Mammary epithelial cell (primary cell): ENCODE measurements at regions of chr15 and their contacts with region 1.

Region 1: DNA sequence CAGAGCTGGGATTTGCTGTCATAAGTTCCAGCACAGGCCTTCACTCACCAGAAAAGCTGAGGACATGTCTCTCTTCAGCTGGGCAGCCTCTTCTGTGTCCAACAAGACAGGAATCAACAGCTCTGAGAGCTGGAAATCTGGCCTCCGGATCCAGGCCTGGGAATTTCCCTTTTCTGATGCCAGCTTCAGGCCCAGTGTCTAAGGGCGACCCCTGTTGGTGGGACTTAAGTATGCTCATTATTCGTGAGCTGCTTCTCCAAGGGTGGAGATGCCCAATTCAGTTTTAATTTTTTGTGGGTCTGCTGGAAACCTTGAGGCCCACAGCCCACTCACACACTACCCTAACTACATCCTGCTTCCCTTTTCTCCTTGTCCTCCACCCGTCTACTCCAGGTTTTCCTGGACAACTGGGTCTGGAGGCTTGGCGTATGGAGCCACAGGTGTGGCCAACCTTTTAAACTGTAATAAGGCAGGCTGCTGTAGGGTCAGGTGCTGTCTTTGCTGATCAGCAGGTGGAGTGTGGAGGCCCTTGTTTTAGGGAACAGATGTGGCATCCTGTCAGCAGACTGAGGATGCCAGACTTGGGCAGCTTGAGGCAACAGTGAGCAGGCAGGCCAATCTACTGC is 2.6 kb upstream of the CEMIP start:
- DNase-seq: peak; percentile 69
- H3K4me3 ChIP-seq: no peak overlapping the region
- H3K27ac ChIP-seq: peak overlapping the region; percentile 38
- H3K4me1 ChIP-seq: peaks cover 26% of the 10 kb centered on the region
- H3K27me3 ChIP-seq: no peaks in the 10 kb centered on the region
- CTCF ChIP-seq: peak; percentile 86 to 90

Region 2: DNA sequence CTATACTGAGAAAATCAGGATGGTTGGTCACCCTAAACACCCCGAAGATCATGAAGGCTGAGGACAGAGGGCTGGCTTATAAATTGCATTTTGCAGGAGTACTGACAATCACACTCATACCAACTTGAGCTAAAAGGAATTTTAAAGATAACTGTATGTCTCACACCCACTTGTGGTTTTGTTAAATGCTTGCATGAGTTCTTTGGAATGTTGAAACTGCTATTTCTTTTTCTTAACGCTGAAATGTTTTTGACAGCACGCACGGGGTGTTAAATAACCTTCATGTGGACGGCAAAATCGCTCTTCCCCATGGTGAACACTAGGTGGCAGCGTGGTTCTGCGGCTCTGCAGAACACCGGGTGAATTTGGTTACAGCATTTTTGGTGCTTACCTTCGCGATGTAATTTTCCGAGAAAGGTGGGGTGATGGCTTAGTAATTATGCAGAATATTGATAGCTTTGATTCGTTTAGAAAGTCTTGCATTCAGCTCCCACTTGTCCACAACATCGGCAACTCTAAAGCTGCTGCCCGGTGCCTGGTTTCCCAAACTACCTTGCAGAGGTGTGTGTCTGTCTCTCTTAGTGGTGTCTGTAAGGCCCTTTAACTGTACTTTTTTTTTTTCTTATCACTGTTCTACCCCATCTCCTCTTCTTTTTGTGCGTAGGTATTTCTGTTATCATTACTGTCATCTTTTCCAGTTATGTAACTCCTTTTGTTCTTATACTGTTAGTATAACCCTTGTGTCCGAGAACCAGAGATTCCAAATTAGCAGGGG is 320.7 kb before region 1 on chr15:
- CTCF ChIA-PET with region 1: interaction called, 7 read pairs
- dilution Hi-C with region 1: no loop called
- in situ Hi-C with region 1: loop called (anchors 5 kb)
- intact Hi-C with region 1: loop called (anchors 1 kb)
- DNase-seq: peak; percentile 72
- H3K4me3 ChIP-seq: no peak overlapping the region
- H3K27ac ChIP-seq: no peak overlapping the region
- H3K4me1 ChIP-seq: peaks cover 5% of the 10 kb centered on the region
- H3K27me3 ChIP-seq: no peaks in the 10 kb centered on the region
- CTCF ChIP-seq: peak; percentile 95 to 97

Region 3: GRCh38 chr15:80604583-80605575 is 171.7 kb before region 1 on chr15:
- CTCF ChIA-PET with region 1: no interaction called
- dilution Hi-C with region 1: no loop called
- in situ Hi-C with region 1: no loop called
- intact Hi-C with region 1: no loop called
- DNase-seq: no peak
- H3K4me3 ChIP-seq: no peak overlapping the region
- H3K27ac ChIP-seq: no peak overlapping the region
- H3K4me1 ChIP-seq: peaks cover 23% of the 10 kb centered on the region
- H3K27me3 ChIP-seq: no peaks in the 10 kb centered on the region
- CTCF ChIP-seq: no peak

Region 4: DNA sequence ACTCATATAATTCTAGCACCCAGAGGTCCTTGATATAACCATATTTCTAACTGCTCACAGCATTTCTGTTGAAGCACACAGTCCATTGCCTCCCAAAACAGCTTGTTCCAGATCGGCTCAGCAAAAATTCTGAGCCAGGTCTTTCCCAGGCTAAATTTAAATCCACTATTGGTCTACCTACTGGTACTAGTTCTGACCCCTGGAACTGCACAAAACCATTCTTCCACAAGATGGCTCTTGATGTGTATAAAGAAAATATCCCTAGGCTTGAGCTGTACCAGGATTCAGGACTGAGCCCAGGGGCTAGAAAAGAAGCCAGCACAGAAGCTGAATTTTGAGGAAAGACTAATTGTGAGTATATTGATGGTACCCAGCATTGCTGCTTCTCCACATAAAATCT is 156.9 kb before region 1 on chr15:
- CTCF ChIA-PET with region 1: interaction called, 21 read pairs
- dilution Hi-C with region 1: no loop called
- in situ Hi-C with region 1: no loop called
- intact Hi-C with region 1: loop called (anchors 1 kb)
- DNase-seq: peak; percentile 24
- H3K4me3 ChIP-seq: no peak overlapping the region
- H3K27ac ChIP-seq: no peak overlapping the region
- H3K4me1 ChIP-seq: peaks cover 12% of the 10 kb centered on the region
- H3K27me3 ChIP-seq: no peaks in the 10 kb centered on the region
- CTCF ChIP-seq: peak in 1 of 2 donors; percentile 41

Region 5: GRCh38 chr15:80695104-80695910 is 81.2 kb before region 1 on chr15 and contains the start of gene ABHD17C:
- CTCF ChIA-PET with region 1: interaction called, 3 read pairs
- dilution Hi-C with region 1: no loop called
- in situ Hi-C with region 1: no loop called
- intact Hi-C with region 1: loop called (anchors 2 kb)
- DNase-seq: peak; percentile 70
- H3K4me3 ChIP-seq: peak within 1 kb of the TSS; percentile 89 to 95 (median 95)
- H3K27ac ChIP-seq: peak within 1 kb of the TSS; percentile 79
- H3K4me1 ChIP-seq: peaks cover 19% of the 10 kb centered on the region
- H3K27me3 ChIP-seq: no peaks in the 10 kb centered on the region
- CTCF ChIP-seq: no peak
- total RNA-seq, gene ABHD17C: 5.2 to 23.2 TPM

Region 6: DNA sequence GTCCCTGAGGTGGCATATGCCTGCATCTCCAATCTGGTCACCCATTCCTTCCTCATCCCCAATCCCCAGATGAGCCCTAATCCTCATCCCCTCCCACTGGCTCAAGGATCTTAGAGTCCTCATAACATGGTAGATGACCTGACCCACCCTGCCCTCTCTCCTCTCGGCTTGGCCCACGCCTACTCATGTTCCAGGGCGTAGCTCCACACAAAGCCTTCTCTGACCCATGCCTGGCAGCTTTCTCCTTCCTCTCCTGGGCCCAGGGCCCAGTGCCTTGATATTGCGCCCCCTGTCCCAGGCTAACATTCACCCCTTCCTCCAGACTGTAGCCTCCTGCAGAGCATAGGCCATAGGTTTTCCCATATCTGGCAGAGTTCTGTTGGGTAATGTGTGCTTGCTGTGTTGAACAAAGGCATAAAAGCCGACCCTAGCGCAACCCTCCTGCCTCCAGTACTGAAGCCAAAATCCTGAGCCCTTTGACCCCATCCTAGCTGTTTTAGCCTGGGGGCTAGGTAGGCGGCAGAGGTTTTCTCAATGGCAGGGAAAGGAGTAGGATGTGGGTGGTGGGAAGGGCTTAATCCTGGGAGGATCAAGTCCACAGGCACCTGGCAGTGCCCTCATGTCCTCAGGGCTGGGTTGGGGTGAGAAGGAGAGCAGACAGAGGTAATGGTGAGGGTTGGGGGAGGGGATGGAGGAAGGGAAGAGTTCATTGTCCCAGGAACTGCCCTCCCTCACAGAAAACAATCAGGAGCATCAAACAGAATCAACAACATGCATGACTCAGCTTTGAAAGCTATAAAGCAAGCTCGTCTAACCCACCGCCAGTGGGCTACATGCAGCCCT is 177.6 kb after region 1 on chr15:
- CTCF ChIA-PET with region 1: no interaction called
- dilution Hi-C with region 1: no loop called
- in situ Hi-C with region 1: loop called in 1 of 2 experiments (anchors 10 kb)
- intact Hi-C with region 1: no loop called
- DNase-seq: no peak
- H3K4me3 ChIP-seq: no peak overlapping the region
- H3K27ac ChIP-seq: no peak overlapping the region
- H3K4me1 ChIP-seq: peaks cover 19% of the 10 kb centered on the region
- H3K27me3 ChIP-seq: no peaks in the 10 kb centered on the region
- CTCF ChIP-seq: no peak

Region 7: GRCh38 chr15:81106560-81106959 is 330.0 kb after region 1 on chr15:
- CTCF ChIA-PET with region 1: no interaction called
- dilution Hi-C with region 1: no loop called
- in situ Hi-C with region 1: no loop called
- intact Hi-C with region 1: loop called (anchors 5 kb)
- DNase-seq: peak; percentile 67
- H3K4me3 ChIP-seq: no peak overlapping the region
- H3K27ac ChIP-seq: no peak overlapping the region
- H3K4me1 ChIP-seq: peaks cover 11% of the 10 kb centered on the region
- H3K27me3 ChIP-seq: no peaks in the 10 kb centered on the region
- CTCF ChIP-seq: peak; percentile 79 to 82